BJ (cell line): ENCODE measurements at regions of chr6 and their contacts with region 1.

Region 1: GRCh38 chr6:44667668-44668390 is 280.3 kb downstream of the CDC5L start:
- DNase-seq: no peak
- H3K4me3 ChIP-seq: no peak overlapping the region
- H3K27me3 ChIP-seq: no peaks in the 10 kb centered on the region; the same call in 1 of the 2 replicates
- CTCF ChIP-seq: peak; percentile 59

Region 2: GRCh38 chr6:44680409-44680720 is 12.5 kb after region 1 on chr6:
- CTCF ChIA-PET with region 1: interaction called, 15 read pairs
- POLR2A ChIA-PET with region 1: no interaction called
- DNase-seq: no peak
- H3K4me3 ChIP-seq: no peak overlapping the region
- H3K27me3 ChIP-seq: peaks cover 9% of the 10 kb centered on the region; the same call in 1 of the 2 replicates
- CTCF ChIP-seq: no peak